Mucosa of descending colon (tissue), 3 donors: ENCODE measurements at regions of chr7 and their contacts with region 1.

Region 1: DNA sequence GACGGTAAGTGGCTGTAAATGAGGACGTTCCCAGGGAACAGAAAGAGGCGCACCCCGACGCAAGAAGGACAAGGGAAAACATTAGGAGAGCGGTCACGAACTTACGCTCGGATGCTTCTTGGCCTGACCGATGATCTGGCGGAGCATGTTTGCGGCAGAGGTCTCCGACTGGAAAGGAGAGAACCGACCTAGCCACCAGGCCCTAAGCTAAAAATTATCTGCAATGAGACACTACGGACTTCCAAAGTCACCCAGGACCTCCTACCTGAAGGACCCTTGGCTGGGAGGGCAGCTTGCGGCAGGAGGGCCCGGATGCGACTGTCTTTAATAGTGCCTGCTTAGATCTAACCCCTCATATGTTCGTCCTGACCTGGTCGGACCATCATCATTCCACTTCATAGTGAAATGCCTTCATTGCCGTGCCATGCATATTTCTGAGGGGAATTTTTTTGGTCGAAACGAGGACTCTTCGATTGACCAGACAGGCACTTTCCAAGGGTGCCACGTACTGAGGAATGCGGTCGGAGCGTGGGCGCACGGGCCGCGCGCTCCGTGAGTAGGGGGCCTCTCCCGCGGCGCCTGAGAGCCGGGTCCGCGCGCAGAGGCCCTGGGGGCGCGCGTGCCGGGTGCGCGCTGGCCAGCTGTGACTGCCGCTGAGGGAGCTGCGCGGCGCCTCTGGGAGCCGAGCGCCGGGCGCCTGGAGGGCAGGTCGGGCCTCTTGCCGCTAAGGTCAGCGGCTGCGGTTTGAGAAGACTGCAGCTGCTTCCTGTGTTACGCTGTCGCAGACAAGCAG is 33.6 kb upstream of the PHF14 start:
- DNase-seq: peak; percentile 88 to 92 (median 91)
- ATAC-seq: peak; percentile 97
- H3K4me3 ChIP-seq: peak overlapping the region; percentile 85
- H3K4me1 ChIP-seq: peaks cover 11% of the 10 kb centered on the region
- CTCF ChIP-seq: no peak

Region 2: GRCh38 chr7:10662982-10663884 is 276.9 kb before region 1 on chr7:
- intact Hi-C with region 1: no loop called
- DNase-seq: no peak
- ATAC-seq: no peak
- H3K4me3 ChIP-seq: no peak overlapping the region
- H3K4me1 ChIP-seq: no peaks in the 10 kb centered on the region
- CTCF ChIP-seq: no peak

Region 3: GRCh38 chr7:10973061-10973944 is 33.2 kb after region 1 on chr7 and contains the start of gene PHF14:
- intact Hi-C with region 1: loop called in 1 of 2 experiments (anchors 5 kb)
- DNase-seq: peak; percentile 97 to 98 (median 97)
- ATAC-seq: peak; percentile 98
- H3K4me3 ChIP-seq: peak within 1 kb of the TSS; percentile 50
- H3K4me1 ChIP-seq: peaks cover 7% of the 10 kb centered on the region
- CTCF ChIP-seq: no peak
- total RNA-seq, gene PHF14: 30.8 to 31.9 (median 31.7) TPM